ENCODE measurements at regions of chr9 and their contacts with region 1.

Region 1: GRCh38 chr9:108761655-108762347 is 94.0 kb downstream of the ACTL7B start:
- DNase-seq: peak; percentile 48 to 57
- H3K4me3 ChIP-seq: no peak overlapping the region
- H3K4me3 Mint-ChIP-seq: no peak overlapping the region
- H3K27ac Mint-ChIP-seq: no peak overlapping the region
- H3K4me1 ChIP-seq: no peaks in the 10 kb centered on the region
- H3K4me1 Mint-ChIP-seq: no peaks in the 10 kb centered on the region
- H3K27me3 ChIP-seq: no peaks in the 10 kb centered on the region
- H3K27me3 Mint-ChIP-seq: peaks cover 10% of the 10 kb centered on the region
- CTCF ChIP-seq: peak; percentile 63 to 90

Region 2: DNA sequence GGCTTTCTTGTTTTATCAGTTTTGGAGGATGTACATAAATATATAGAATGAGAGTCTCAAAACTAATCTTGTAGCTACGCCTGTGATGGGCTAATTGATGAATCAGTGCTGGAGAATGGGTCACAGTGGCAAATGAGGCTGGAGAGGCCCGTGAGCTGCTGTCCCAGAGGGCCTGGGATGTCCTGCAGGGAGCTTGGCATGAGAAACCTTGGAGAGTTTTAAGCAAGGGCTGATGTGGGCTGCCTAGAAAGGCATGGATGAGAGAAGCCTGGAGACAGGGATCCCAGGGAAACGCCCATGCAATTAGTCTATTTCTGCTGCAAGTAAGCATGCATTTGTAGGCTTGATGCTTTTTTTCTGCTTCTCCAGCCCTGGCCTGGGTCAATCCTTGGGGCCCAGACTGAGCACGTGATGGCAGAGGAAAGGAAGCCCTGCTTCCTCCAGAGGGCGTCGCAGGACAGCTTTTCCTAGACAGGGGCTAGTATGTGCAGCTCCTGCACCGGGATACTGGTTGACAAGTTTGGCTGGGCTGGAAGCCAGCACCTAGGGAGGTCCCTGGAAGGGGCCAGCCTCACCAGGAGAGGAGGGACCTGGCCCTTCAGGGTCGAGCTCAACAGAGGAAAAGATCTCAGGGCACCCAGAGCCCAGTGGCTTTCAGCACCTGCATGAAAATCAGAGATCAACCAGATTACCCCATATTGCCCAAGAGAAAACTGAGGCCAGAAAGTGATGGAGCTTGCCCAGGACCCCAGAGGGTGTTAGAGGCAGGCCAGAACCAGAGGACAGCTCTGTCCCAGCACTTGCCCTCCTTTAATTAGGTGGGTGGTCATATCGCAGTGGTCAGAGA is 1339.6 kb before region 1 on chr9:
- CTCF ChIA-PET with region 1: no interaction called
- POLR2A ChIA-PET with region 1: no interaction called
- intact Hi-C with region 1: loop called (anchors 1 kb)
- DNase-seq: peak; percentile 84 to 87
- H3K4me3 ChIP-seq: no peak overlapping the region
- H3K4me3 Mint-ChIP-seq: no peak overlapping the region
- H3K27ac Mint-ChIP-seq: no peak overlapping the region
- H3K4me1 ChIP-seq: no peaks in the 10 kb centered on the region
- H3K4me1 Mint-ChIP-seq: no peaks in the 10 kb centered on the region
- H3K27me3 ChIP-seq: no peaks in the 10 kb centered on the region
- H3K27me3 Mint-ChIP-seq: no peaks in the 10 kb centered on the region
- CTCF ChIP-seq: peak; percentile 80 to 87

Region 3: GRCh38 chr9:108468402-108468801 is 293.4 kb before region 1 on chr9:
- CTCF ChIA-PET with region 1: no interaction called
- POLR2A ChIA-PET with region 1: no interaction called
- intact Hi-C with region 1: loop called (anchors 2 kb)
- DNase-seq: peak in 1 of 2 experiments; percentile 55
- H3K4me3 ChIP-seq: no peak overlapping the region
- H3K4me3 Mint-ChIP-seq: no peak overlapping the region
- H3K27ac Mint-ChIP-seq: no peak overlapping the region
- H3K4me1 ChIP-seq: no peaks in the 10 kb centered on the region
- H3K4me1 Mint-ChIP-seq: peaks cover 7% of the 10 kb centered on the region
- H3K27me3 ChIP-seq: no peaks in the 10 kb centered on the region; the same call in 1 of the 2 replicates
- H3K27me3 Mint-ChIP-seq: peaks cover 5% of the 10 kb centered on the region
- CTCF ChIP-seq: peak; percentile 44 to 64

Region 4: GRCh38 chr9:108704156-108704852 is 57.5 kb before region 1 on chr9:
- CTCF ChIA-PET with region 1: no interaction called
- POLR2A ChIA-PET with region 1: no interaction called
- intact Hi-C with region 1: no loop called
- DNase-seq: no peak
- H3K4me3 ChIP-seq: no peak overlapping the region
- H3K4me3 Mint-ChIP-seq: no peak overlapping the region
- H3K27ac Mint-ChIP-seq: no peak overlapping the region
- H3K4me1 ChIP-seq: no peaks in the 10 kb centered on the region
- H3K4me1 Mint-ChIP-seq: no peaks in the 10 kb centered on the region
- H3K27me3 ChIP-seq: no peaks in the 10 kb centered on the region
- H3K27me3 Mint-ChIP-seq: peaks cover 16% of the 10 kb centered on the region
- CTCF ChIP-seq: no peak

Region 5: DNA sequence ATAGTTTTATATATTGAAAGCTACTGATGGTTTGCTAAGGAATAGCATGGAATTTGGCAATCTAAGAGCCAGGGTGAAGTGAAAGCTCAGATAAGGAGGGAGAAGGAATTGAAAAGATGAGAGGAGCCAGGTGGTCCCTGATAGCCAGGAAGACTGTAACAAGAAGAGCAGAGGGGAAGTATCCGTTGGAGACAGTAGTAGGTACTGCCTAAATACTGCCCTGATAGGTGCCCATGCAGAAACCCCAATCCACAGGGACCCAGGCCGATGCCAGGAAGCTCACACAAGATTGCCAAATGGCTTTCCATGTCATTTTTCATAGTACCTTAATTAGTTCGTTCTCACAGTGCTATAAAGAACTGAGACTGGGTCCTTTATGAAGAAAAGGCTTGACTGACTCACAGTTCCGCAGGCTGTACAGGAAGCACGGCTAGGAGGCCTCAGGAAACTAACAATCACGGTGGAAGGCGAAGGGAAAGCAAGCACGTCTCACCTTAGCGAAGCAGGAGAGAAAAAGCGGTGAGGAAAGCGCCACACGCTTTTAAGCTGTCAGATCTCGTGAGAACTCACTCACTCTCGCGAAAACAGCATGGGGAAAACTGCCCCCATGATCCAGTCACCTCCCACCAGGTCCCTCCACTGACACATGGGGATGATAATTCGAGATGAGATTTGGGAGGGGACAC is 81.0 kb after region 1 on chr9:
- CTCF ChIA-PET with region 1: no interaction called
- POLR2A ChIA-PET with region 1: no interaction called
- intact Hi-C with region 1: no loop called
- DNase-seq: no peak
- H3K4me3 ChIP-seq: no peak overlapping the region
- H3K4me3 Mint-ChIP-seq: no peak overlapping the region
- H3K27ac Mint-ChIP-seq: no peak overlapping the region
- H3K4me1 ChIP-seq: no peaks in the 10 kb centered on the region; the same call in 1 of the 2 replicates
- H3K4me1 Mint-ChIP-seq: no peaks in the 10 kb centered on the region
- H3K27me3 ChIP-seq: no peaks in the 10 kb centered on the region
- H3K27me3 Mint-ChIP-seq: no peaks in the 10 kb centered on the region
- CTCF ChIP-seq: no peak

Measured in Caco-2 (cell line).